Activated naive CD8-positive, alpha-beta T cell treated with anti-CD3 and anti-CD28 coated beads, Interleukin-2, amount 10 ng/mL, durations not matched to agents 7 days and 5 days (primary cell): ENCODE measurements at regions of chr1 and their contacts with region 1.

Region 1: DNA sequence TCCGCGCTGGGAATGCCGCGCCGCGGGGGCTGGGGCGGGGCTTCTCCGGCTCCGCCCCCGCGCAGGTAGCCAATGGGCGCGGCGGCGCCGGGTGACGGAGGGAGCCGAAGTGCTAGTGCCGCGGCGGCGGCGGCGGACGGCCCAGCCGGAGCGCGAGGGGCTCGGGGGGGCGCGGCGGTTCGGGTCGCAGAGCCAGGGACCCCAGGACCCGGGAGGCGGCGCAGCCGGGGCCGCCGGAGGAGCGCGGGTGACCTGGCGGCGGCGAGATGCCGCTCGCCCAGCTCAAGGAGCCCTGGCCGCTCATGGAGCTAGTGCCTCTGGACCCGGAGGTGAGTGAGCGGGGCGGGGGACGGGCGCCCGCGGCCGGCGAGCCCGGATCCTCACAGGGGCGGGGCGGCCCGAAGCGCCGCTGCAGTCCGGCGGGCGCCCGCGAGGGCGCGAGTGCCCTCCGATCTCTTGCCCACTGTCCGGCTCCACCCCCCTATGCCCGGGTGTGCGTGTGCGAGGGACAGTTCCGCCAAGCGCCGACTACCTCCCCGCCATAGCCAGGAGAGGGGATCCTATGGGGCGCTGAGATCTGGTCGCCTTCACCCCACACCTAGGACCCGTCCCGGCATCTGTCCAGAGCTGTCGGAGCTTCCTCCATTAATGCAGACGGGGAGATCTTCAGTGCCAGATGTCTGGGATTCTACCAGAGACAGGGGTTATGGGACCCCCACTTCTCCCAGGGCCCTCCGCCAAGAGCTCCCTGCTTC is at the start of gene RPS6KA1:
- DNase-seq: peak; percentile 83
- ATAC-seq: peak; percentile 91
- H3K4me3 Mint-ChIP-seq: peak within 1 kb of the TSS; percentile 91
- H3K27ac Mint-ChIP-seq: peak within 1 kb of the TSS; percentile 87
- H3K4me1 Mint-ChIP-seq: peaks cover 28% of the 10 kb centered on the region
- H3K27me3 Mint-ChIP-seq: peaks cover 4% of the 10 kb centered on the region
- total RNA-seq, gene RPS6KA1: 138 to 153 TPM

Region 2: DNA sequence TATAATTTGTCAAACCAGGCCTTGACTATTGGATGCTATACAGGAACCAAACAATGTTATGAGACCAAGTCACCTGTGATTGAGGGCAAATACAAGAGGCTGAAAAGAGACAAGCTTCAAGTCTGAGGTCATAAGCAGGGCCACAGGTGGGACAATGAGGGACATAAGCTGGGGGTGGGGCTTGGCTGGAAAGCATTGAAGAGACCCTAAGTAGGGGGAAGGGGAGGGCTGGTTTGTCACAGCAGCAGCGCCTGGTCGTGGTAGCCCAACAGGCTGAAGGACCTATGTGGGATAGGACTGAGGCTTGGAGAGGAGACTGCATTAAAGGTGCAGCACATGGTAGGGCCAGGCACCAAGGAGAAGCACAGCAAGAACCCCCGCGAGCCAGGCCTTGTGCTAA is 39.7 kb before region 1 on chr1:
- POLR2A ChIA-PET with region 1: no interaction called
- DNase-seq: no peak
- ATAC-seq: no peak
- H3K4me3 Mint-ChIP-seq: no peak overlapping the region
- H3K27ac Mint-ChIP-seq: no peak overlapping the region
- H3K4me1 Mint-ChIP-seq: peaks cover 5% of the 10 kb centered on the region
- H3K27me3 Mint-ChIP-seq: no peaks in the 10 kb centered on the region

Region 3: GRCh38 chr1:26541816-26542711 is 12.2 kb after region 1 on chr1:
- POLR2A ChIA-PET with region 1: interaction called, 24 read pairs
- DNase-seq: peak; percentile 84
- ATAC-seq: peak; percentile 78
- H3K4me3 Mint-ChIP-seq: peak overlapping the region; percentile 77
- H3K27ac Mint-ChIP-seq: peak overlapping the region; percentile 93
- H3K4me1 Mint-ChIP-seq: peaks cover 71% of the 10 kb centered on the region
- H3K27me3 Mint-ChIP-seq: no peaks in the 10 kb centered on the region

Region 4: GRCh38 chr1:26555550-26556510 is 26.0 kb after region 1 on chr1:
- POLR2A ChIA-PET with region 1: no interaction called
- DNase-seq: no peak
- ATAC-seq: no peak
- H3K4me3 Mint-ChIP-seq: no peak overlapping the region
- H3K27ac Mint-ChIP-seq: no peak overlapping the region
- H3K4me1 Mint-ChIP-seq: no peaks in the 10 kb centered on the region
- H3K27me3 Mint-ChIP-seq: no peaks in the 10 kb centered on the region

Region 5: GRCh38 chr1:26602378-26602959 is 72.6 kb after region 1 on chr1:
- POLR2A ChIA-PET with region 1: no interaction called
- DNase-seq: no peak
- ATAC-seq: no peak
- H3K4me3 Mint-ChIP-seq: no peak overlapping the region
- H3K27ac Mint-ChIP-seq: no peak overlapping the region
- H3K4me1 Mint-ChIP-seq: peaks cover 11% of the 10 kb centered on the region
- H3K27me3 Mint-ChIP-seq: peaks cover 6% of the 10 kb centered on the region